Cardiac septum (tissue), 1 donor: ENCODE measurements at regions of chr17 and their contacts with region 1.

Region 1: GRCh38 chr17:32142038-32142856 is at the start of gene RHOT1:
- DNase-seq: peak; percentile 88
- total RNA-seq, gene RHOT1: 39.4 TPM

Region 2: GRCh38 chr17:32127158-32127897 is 14.9 kb before region 1 on chr17:
- intact Hi-C with region 1: no loop called
- DNase-seq: peak; percentile 94

Region 3: GRCh38 chr17:32174889-32175288 is 32.6 kb after region 1 on chr17:
- intact Hi-C with region 1: no loop called
- DNase-seq: no peak

Region 4: DNA sequence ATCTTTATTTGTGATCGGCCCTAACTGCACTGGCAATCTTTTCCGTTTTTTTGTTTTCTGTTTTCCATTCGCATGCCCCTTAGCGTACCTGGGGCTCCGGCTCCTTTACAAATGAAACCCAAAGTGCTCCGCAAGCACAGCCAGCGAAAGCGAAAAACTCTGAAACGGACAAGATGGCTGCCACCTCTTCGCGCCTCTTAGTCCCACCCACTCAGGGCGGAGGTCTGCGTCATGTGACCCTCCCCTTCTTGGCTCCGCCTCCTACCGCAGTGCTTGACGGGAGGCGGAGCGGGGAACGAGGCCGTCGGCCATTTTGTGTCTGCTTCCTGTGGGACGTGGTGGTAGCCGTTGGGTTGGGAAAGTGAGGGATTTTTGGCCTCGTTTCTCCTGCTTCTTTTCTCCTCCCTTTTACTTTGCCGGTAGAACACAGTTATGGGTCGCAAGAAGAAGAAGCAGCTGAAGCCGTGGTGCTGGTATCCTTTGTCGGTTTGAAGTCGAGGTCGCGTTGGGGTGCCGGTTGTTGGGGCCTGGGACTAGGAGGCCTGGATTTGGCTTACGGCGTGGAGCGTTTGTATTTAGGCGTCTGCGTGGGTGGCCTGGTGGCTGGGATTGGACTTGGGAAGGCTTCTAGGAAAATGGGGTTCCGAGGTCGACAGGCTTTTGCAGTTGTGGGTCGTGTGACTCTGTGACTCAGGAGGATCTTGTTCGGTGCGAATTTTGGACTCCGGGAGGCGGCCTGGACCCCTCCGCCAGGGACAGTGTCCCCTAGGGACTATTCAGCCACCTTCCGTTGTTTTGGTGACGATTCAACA is 207.8 kb after region 1 on chr17 and contains the start of gene ZNF207:
- intact Hi-C with region 1: loop called (anchors 10 kb)
- DNase-seq: peak; percentile 98
- total RNA-seq, gene ZNF207: 83.7 TPM

Region 5: DNA sequence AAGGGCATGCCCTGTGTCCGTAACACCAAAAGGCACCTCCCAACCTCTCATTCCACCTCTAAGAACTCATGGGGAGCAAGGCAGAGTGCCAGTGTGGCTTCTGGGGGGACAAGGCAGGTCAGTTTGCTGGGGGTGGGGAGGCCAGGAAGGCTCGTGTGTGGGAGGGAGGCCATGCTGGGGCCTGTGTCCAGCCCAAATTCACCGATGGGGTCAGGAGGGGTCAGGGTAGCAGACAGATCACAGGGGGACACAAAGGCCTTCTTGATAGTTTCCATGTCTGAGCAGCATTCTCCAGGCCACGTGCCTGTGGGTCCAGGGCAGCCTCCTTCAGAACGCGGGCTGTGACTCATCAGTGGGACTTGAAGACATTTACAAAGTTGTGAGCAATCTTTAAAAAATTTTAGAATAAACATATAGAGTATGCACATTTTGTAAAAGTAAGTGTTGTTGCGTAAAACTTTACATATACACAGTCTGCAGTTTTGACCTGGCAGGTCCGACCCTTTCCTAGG is 870.3 kb after region 1 on chr17:
- intact Hi-C with region 1: no loop called
- DNase-seq: no peak